Cardiac septum (tissue), 1 donor: ENCODE measurements at regions of chr18 and their contacts with region 1.

Region 1: GRCh38 chr18:59837586-59837985 is 62.2 kb upstream of the PMAIP1 start:
- DNase-seq: no peak

Region 2: DNA sequence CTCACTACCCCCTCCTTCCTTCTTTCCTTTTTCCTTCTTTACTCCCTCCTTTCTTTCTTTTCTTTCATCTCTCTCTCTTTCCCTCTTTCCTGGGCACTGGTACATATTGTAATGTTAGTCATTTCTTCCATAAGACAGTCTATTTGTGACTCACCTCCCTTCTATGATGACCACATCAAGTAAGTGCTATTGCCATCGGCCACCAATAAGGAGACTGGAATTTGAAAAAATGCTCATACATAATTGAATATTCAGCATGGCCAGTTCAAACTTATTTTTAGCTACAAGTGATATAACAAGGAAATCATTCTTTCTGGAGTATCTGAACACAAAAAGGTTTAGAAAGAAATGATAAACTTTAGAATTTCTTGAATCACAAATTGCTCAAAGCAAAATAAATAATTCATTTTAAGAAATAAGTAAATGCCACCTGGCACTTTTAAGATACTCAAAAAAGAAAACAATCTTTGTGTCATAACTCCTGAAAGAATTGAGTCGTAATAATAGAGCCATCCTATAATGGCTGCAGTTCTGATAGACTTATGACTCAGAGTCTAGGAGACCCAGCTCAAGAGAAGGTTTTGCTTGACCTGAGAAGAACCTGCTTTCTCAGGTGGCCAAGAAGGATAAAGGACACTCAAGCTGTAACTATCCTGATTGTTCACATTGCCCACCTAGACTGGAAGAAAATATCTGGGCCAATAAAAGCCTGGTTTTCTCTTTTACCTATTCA is 88.8 kb before region 1 on chr18:
- intact Hi-C with region 1: no loop called
- DNase-seq: no peak

Region 3: DNA sequence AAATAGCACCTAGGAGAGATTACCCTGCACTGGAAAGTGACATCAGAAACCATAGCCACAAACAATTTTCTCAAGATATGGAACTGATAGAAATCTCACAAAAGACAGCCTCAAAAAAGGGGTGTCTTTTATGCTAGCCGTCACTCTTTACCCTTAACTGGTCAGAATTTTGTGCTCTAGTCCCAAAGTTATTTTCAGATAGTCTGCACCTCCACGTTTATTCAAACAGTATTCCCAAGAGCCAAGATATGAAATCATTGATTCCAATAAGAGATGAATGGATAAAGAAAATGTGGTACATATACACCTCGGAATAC is 38.7 kb after region 1 on chr18:
- intact Hi-C with region 1: no loop called
- DNase-seq: no peak

Region 4: GRCh38 chr18:59961086-59961485 is 123.5 kb after region 1 on chr18:
- intact Hi-C with region 1: loop called (anchors 10 kb)
- DNase-seq: no peak

Region 5: GRCh38 chr18:60549338-60549960 is 711.9 kb after region 1 on chr18:
- intact Hi-C with region 1: loop called (anchors 10 kb)
- DNase-seq: no peak